Aorta (tissue), 5 donors: ENCODE measurements at regions of chr11 and their contacts with region 1.

Region 1: GRCh38 chr11:31397239-31397834 is 27.7 kb downstream of the DNAJC24 start:
- DNase-seq: no peak
- ATAC-seq: no peak
- H3K4me3 ChIP-seq: no peak overlapping the region
- H3K27ac ChIP-seq: no peak overlapping the region
- H3K4me1 ChIP-seq: no peaks in the 10 kb centered on the region
- H3K27me3 ChIP-seq: no peaks in the 10 kb centered on the region

Region 2: DNA sequence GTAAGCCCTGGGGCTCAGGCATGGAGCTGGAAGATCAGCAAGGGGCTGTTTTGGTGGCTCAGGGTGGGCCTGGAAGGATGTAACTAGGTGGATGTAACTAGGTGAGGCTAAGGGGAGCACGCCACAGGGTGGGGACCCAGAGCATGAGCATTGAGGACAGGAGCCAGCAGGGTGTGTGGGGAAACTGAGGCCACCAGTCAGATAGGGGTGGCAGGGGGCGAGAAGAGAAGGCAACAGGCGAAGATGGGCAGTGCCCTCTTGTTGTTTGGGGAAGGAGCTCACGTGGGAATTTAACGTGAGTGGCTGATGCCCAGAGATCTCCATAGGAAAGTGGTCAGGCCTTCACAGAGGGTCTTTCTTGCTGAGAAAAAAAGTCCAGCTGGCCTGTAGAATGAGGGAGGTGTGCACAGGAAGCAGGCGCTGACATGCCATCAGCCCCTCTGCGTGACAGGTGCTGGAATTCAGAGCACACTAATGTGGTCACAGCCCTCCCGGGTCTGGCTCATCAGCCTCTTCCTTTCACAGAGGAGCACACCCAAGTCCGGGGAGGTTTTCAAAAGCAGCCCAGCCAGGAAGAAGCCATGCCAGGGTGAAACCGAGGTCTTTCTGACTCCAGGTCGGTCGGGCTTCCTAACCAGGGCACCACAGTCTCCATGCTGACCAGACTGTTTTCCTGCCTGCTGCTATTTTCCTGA is 468.4 kb after region 1 on chr11:
- intact Hi-C with region 1: loop called (anchors 5 kb)
- DNase-seq: no peak
- ATAC-seq: no peak
- H3K4me3 ChIP-seq: no peak overlapping the region
- H3K27ac ChIP-seq: no peak overlapping the region
- H3K4me1 ChIP-seq: no peaks in the 10 kb centered on the region
- H3K27me3 ChIP-seq: no peaks in the 10 kb centered on the region

Region 3: GRCh38 chr11:31870609-31871309 is 473.4 kb after region 1 on chr11:
- intact Hi-C with region 1: loop called (anchors 5 kb)
- DNase-seq: peak in 1 of 2 donors; percentile 43
- ATAC-seq: peak; percentile 59
- H3K4me3 ChIP-seq: no peak overlapping the region
- H3K27ac ChIP-seq: no peak overlapping the region
- H3K4me1 ChIP-seq: no peaks in the 10 kb centered on the region
- H3K27me3 ChIP-seq: peaks cover 0 to 2% of the 10 kb centered on the region in 2 donors

Region 4: DNA sequence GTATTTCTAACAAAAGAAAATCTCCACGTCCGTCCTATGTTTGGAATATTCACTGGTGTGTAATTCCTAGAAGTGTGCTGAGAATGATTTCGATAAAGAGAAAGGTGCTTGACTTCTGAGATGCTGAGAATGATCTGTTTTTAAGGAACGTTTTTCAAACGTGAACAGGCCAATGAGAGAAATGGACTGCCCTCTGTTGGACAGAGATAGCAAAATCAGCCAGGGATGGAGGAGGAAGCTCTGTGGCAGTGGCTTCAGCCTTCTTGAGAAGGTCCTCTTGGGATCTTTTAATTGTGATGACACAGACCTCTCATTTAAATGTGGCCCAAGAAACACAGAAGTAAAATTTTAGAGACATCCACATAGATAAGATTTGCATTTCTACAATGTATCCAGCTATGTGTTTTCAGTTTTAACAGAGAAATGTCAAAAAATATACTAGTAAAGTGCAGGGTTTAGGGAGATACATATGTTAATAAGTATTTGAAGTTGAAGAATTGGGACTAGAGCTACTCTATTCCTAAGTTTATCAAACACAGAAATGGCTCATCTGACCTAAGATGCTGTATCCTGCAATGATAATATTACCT is 609.6 kb after region 1 on chr11:
- intact Hi-C with region 1: loop called in 1 of 2 experiments (anchors 10 kb)
- DNase-seq: no peak
- ATAC-seq: no peak
- H3K4me3 ChIP-seq: no peak overlapping the region
- H3K27ac ChIP-seq: no peak overlapping the region
- H3K4me1 ChIP-seq: no peaks in the 10 kb centered on the region
- H3K27me3 ChIP-seq: no peaks in the 10 kb centered on the region